AG04449 (cell line): ENCODE measurements at regions of chr12 and their contacts with region 1.

Region 1: DNA sequence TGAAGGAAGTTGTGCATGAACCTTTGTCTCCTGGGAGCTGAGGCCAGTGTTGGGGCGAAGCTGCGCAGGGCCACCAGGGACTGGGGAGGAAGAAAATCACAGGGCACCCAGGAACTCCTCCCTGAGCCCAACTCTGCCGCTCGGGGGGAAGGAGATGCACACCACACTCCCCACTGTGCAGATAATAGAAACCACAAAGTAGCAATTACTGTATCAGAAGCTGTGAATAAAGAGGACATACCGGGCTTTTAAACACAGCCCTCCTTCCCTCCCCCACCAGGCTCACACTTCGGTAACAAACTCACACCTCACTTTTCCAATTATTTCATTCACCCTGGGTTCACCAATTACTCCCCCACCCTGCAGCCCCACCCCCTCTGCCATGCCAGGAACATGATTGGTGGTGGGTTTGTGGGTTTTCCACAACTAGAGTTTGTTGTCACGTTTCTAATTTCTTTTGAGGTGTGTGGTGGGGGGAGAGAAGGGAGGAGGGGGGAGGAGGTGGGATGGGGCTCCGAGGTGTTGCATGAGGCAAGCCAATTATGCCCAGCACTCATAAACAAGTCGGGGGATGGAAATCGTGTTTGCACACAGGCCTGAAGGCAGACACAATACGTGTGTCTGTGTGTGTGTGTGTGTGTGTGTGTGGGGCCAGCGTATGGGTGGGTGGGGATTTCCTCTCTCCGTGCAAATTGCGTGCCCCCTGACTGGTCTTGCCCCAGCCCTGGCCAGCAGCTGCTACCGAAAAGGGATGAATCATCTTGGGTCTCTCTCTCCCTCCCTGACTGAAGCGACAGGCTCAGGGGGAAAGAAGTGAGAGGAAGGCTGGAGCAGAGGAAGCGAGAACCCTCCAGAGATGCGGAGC is 103.3 kb downstream of the RBM19 start:
- DNase-seq: peak; percentile 45
- H3K4me3 ChIP-seq: no peak overlapping the region
- CTCF ChIP-seq: no peak

Region 2: DNA sequence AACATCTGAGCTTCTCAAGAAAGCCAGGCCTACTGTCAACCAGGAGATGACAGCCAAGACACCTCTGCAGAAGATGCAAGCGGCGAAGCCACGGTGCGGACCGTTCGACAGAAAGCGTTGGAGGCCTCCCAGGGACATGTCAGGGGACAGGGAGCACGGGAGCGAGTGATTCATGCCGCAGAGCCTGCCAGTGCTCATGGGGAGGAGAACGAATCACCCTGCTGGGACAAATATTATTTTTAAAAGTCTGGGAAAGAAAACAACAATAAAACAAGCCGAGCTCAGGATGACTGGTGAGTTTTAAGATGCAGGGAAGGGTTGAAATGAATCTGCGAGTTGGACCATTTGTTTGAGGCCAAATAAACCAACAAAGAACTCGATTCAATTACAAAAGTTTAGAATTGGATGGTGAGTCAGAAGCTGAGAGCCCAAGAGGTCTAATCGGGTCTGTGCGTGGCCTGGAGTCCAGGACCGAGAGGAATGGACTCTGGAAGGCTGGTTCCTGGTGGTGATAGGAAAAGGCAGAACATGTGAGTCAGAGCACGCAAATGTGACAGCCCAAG is 12.3 kb after region 1 on chr12:
- CTCF ChIA-PET with region 1: interaction called, 14 read pairs
- POLR2A ChIA-PET with region 1: no interaction called
- DNase-seq: no peak
- H3K4me3 ChIP-seq: no peak overlapping the region
- CTCF ChIP-seq: no peak

Region 3: GRCh38 chr12:113880988-113881962 is 18.5 kb after region 1 on chr12:
- CTCF ChIA-PET with region 1: interaction called, 14 read pairs
- POLR2A ChIA-PET with region 1: no interaction called
- DNase-seq: no peak
- H3K4me3 ChIP-seq: no peak overlapping the region
- CTCF ChIP-seq: no peak